MCF 10A (cell line): ENCODE measurements at regions of chr5 and their contacts with region 1.

Region 1: DNA sequence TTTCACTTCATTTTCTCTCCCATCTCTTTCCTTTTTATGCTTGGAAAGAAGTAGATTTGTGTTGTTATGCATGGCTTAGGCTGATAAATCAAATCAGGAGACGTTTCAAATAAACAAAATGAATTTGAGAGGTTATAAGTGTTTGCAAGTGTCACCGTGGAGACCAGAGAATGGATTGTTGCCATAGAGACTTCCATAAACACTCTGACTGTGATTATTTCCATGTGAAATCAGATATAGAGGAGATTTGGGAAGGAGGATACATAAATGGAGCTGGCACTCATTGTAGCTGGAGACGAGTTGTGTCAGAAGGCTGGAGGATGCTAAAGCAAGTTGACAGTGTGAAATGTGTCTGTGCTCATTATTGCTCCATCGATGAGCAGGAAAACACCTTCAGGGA is 84.2 kb upstream of the PCSK1 start:
- DNase-seq: no peak
- H3K4me3 Mint-ChIP-seq: no peak overlapping the region
- H3K27ac Mint-ChIP-seq: peak overlapping the region; percentile 10
- H3K4me1 Mint-ChIP-seq: peaks cover 14% of the 10 kb centered on the region
- H3K27me3 Mint-ChIP-seq: no peaks in the 10 kb centered on the region
- CTCF ChIP-seq: no peak

Region 2: DNA sequence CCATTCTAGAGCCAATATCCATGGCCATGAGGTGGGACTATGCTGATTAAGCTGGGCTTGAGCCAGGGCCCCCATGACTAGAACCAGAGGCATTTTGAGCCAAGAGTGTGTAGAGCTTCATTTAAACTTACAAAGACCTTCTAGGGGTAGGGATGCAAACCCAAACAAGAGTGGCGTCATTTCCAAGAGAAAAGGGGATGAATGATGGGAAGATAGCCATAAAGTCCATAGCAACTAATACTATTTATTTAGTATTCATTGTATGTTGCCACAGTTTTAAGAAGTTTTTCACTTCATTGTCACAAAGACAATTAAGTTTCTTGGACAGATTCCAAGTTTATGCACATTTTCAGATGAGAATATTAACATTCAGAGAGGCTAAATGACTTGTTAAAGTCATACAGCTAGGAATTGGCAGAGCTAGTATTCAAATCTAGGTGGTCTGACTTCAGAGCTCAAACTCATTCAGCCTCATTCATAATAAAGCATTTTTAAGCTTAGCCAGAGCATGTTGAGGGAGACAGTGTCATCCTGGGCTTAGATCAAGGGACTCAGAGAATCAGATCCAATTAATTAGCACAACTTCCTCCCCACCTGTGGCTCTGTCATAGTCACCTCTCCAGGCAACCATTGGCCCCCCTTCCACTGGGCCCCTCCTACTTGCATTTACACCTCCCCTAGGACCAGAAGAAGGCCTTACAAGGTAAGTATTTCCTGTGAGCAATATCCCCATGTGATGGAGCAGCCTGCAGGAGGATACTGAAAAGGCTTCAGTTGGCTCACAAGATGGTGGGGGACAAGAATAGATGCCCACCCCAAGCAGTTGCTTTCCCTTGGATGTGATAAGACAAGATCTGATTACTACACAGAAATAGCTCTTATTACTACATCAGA is 10.7 kb after region 1 on chr5:
- CTCF ChIA-PET with region 1: interaction called, 3 read pairs
- POLR2A ChIA-PET with region 1: interaction called, 19 read pairs
- intact Hi-C with region 1: no loop called
- DNase-seq: no peak
- H3K4me3 Mint-ChIP-seq: no peak overlapping the region
- H3K27ac Mint-ChIP-seq: no peak overlapping the region
- H3K4me1 Mint-ChIP-seq: no peaks in the 10 kb centered on the region
- H3K27me3 Mint-ChIP-seq: no peaks in the 10 kb centered on the region
- CTCF ChIP-seq: no peak

Region 3: DNA sequence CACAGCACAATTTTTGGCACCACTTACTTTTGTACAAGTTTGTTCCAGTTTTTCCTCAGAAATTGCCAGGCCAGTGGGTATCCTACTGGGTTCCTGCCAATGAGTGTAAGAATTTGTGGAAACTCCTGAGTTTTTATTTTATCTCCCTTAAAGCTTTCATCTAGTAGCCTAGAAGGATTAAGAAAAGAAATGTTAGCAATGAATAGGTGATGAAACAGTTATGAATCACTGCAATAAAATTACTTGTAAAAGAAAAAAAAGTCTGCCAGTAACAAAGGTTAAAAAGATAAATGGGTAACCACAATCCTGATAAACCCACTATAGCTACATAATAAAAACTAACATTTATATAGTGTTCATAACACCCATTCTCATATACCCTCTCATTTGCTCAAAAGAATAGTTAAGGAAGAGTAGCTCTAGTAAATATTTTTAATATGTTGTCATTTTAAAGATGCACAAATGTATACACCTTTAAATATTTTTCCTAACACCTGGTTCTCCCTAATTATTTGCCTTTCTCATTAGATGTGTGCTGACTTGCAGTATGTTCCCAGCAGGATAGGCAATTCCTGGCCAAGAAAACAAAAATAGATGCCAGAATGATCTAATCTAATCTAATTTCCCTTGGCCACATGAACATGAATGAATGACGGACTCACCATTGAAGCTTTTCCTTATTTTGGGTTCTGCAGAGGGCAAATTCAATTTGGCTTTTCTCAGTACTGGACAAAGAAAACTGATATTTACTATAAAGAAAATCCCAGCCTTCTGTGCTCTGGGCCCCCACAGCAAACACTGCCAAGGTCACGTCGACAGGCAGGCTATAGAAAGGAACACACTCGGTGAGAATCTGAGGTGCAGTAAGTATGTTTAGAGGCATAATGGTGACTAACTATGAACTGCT is 264.0 kb after region 1 on chr5:
- CTCF ChIA-PET with region 1: no interaction called
- POLR2A ChIA-PET with region 1: no interaction called
- intact Hi-C with region 1: no loop called
- DNase-seq: peak; percentile 69
- H3K4me3 Mint-ChIP-seq: no peak overlapping the region
- H3K27ac Mint-ChIP-seq: peak overlapping the region; percentile 76
- H3K4me1 Mint-ChIP-seq: peaks cover 18% of the 10 kb centered on the region
- H3K27me3 Mint-ChIP-seq: no peaks in the 10 kb centered on the region
- CTCF ChIP-seq: no peak